ENCODE measurements at regions of chr2 and their contacts with region 1.

Region 1: GRCh38 chr2:66429071-66429477 is 5.9 kb upstream of the MEIS1 start:
- DNase-seq: no peak
- H3K4me3 Mint-ChIP-seq: no peak overlapping the region
- H3K27ac Mint-ChIP-seq: no peak overlapping the region
- H3K4me1 Mint-ChIP-seq: peaks cover 6% of the 10 kb centered on the region
- H3K27me3 Mint-ChIP-seq: peaks cover 74% of the 10 kb centered on the region

Region 2: DNA sequence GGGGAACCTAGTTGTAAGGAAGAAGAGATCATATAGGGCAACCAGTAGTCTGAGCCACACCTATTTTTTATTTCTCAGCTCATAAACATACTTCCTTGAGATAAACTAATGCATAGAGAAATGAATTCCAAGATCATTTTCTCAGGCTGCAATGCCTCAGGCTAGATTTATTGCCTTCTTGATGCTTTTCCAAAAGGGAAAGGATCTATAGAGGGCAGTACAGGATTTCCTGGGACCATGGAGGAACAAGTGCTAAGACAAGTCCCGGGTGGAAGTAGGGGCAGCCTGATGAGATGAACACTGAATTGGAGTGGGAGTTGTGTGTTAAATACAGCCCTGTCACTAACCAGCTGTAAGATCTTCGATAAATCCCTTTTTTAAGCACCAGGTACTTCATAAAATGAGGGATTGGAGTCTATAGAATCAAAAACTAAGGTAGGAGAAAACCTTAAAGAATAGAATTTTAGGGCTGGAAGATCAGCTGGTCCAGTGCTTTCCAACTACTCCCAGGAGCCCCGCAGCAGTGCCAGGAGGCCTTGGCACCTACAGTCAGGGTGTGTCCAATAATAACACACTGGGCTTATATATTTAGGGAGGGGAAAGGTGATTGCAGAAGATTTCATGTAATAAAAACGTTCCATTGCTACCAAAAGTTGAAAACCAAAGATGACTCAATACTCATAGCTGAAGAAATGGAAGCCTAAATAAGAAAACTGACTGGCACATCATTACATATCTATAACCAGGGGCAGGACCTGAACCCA is 1833.5 kb before region 1 on chr2:
- intact Hi-C with region 1: no loop called
- DNase-seq: no peak
- H3K4me3 Mint-ChIP-seq: no peak overlapping the region
- H3K27ac Mint-ChIP-seq: no peak overlapping the region
- H3K4me1 Mint-ChIP-seq: peaks cover 26% of the 10 kb centered on the region
- H3K27me3 Mint-ChIP-seq: no peaks in the 10 kb centered on the region

Region 3: GRCh38 chr2:65647249-65647842 is 781.7 kb before region 1 on chr2:
- intact Hi-C with region 1: loop called (anchors 10 kb)
- DNase-seq: no peak
- H3K4me3 Mint-ChIP-seq: no peak overlapping the region
- H3K27ac Mint-ChIP-seq: no peak overlapping the region
- H3K4me1 Mint-ChIP-seq: no peaks in the 10 kb centered on the region
- H3K27me3 Mint-ChIP-seq: peaks cover 5% of the 10 kb centered on the region

Region 4: DNA sequence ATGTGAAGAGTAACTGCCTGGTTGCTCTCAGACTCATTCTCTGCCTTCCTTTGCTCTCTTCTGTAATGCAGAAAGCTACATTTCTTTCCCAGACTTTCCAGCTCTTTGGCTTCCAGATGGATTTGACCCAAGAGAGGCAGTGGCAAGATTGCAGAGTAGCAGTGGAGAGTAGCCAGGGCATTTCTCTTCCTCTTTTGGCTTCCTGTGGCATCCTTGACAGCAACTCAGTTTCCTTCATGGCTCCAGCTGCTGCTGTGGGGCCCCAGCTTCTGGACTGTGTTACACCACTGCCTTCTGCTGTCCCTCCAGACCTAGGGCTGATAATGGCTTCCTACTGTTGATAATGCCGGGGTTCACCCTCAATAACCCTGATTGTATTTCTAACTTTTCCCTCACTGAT is 527.3 kb before region 1 on chr2:
- intact Hi-C with region 1: no loop called
- DNase-seq: no peak
- H3K4me3 Mint-ChIP-seq: no peak overlapping the region
- H3K27ac Mint-ChIP-seq: no peak overlapping the region
- H3K4me1 Mint-ChIP-seq: no peaks in the 10 kb centered on the region
- H3K27me3 Mint-ChIP-seq: no peaks in the 10 kb centered on the region

Region 5: DNA sequence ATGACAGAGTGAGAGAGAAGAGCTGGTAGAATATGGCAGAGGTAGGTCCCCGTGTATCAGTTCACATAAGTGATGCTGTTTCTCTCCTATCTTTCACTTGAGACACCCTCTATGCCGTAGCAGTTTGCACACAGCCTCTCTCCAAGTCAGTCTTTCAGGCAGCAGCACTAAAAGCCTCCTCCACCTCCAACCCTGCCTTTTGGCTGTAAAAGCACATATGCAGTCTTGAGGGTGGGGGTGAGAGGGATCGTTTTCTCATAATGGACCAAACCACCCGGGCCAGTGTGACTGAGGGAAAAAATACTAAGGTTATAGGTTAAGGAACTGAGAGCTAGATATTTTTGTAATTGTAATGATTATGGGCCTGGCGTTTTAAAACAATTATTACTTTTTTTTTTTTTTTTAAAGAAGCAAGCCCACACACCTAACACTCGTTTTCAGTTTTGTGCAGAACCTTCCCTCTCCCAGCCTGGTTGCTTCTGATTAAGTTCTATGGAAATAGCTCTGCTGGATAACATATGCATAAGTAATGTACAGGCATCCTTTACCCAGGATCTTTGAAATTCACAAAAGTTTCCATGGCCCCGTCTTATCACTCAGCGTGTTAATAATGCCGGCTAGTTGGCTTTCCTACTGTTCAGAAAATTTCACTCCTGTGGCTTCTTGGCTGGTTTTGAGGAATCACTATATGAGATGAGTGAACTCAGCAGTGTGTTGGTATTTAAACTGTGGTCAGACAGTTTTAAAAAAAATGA is 106.4 kb before region 1 on chr2:
- intact Hi-C with region 1: no loop called
- DNase-seq: no peak
- H3K4me3 Mint-ChIP-seq: no peak overlapping the region
- H3K27ac Mint-ChIP-seq: no peak overlapping the region
- H3K4me1 Mint-ChIP-seq: no peaks in the 10 kb centered on the region
- H3K27me3 Mint-ChIP-seq: no peaks in the 10 kb centered on the region

Region 6: GRCh38 chr2:67476809-67477790 is 1048.0 kb after region 1 on chr2:
- intact Hi-C with region 1: loop called (anchors 5 kb)
- DNase-seq: no peak
- H3K4me3 Mint-ChIP-seq: no peak overlapping the region
- H3K27ac Mint-ChIP-seq: no peak overlapping the region
- H3K4me1 Mint-ChIP-seq: no peaks in the 10 kb centered on the region
- H3K27me3 Mint-ChIP-seq: peaks cover 2% of the 10 kb centered on the region

Region 7: DNA sequence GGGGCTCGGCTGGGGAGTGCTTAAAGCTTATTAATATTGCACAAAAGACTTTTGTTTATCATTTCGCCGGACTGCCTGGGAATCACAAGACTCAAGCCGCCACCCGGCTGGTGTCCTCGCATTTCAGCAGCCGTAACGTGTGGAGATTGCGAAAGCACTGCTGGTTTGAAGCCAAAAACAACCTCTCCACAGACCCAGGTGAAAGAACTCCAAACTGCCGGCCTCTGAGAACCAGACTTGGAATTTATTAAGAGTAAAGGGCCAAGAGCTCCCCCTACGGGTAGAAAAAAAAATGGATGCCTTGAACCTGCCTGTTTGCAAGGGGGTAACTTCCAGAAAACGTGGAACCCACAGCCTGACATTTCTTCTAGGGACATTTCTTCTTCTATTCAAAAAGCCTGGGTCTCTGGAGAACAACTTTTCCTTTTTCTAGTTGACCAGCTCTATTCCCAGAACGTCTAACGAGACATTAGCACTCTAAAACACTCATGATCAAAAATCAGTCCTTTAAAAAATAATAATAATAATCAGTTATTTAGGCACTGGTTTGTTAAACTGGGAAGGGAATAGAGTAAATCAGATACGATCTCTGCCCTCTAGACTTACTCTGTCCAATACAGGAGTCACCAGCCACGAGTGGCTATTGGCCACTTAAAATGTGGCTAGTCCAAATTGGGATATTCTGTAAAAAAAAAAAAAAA is 1417.4 kb after region 1 on chr2:
- intact Hi-C with region 1: loop called (anchors 5 kb)
- DNase-seq: peak; percentile 2
- H3K4me3 Mint-ChIP-seq: no peak overlapping the region
- H3K27ac Mint-ChIP-seq: no peak overlapping the region
- H3K4me1 Mint-ChIP-seq: no peaks in the 10 kb centered on the region
- H3K27me3 Mint-ChIP-seq: peaks cover 5% of the 10 kb centered on the region

Region 8: GRCh38 chr2:67871686-67872412 is 1442.8 kb after region 1 on chr2:
- intact Hi-C with region 1: no loop called
- DNase-seq: no peak
- H3K4me3 Mint-ChIP-seq: no peak overlapping the region
- H3K27ac Mint-ChIP-seq: no peak overlapping the region
- H3K4me1 Mint-ChIP-seq: no peaks in the 10 kb centered on the region
- H3K27me3 Mint-ChIP-seq: peaks cover 4% of the 10 kb centered on the region

Measured in activated T-helper 1 cell treated with anti-CD3 and anti-CD28 coated beads, Interleukin-12 subunit alpha, Interleukin-12 subunit beta, Interleukin-2, Interleukin-4 antibody, amounts not matched to agents 30 ng/mL and 10 ng/mL and 1 ng/mL, durations not matched to agents 14 hours and 24 hours and 36 hours (primary cell).